ENCODE measurements at regions of chr12 and their contacts with region 1.

Region 1: DNA sequence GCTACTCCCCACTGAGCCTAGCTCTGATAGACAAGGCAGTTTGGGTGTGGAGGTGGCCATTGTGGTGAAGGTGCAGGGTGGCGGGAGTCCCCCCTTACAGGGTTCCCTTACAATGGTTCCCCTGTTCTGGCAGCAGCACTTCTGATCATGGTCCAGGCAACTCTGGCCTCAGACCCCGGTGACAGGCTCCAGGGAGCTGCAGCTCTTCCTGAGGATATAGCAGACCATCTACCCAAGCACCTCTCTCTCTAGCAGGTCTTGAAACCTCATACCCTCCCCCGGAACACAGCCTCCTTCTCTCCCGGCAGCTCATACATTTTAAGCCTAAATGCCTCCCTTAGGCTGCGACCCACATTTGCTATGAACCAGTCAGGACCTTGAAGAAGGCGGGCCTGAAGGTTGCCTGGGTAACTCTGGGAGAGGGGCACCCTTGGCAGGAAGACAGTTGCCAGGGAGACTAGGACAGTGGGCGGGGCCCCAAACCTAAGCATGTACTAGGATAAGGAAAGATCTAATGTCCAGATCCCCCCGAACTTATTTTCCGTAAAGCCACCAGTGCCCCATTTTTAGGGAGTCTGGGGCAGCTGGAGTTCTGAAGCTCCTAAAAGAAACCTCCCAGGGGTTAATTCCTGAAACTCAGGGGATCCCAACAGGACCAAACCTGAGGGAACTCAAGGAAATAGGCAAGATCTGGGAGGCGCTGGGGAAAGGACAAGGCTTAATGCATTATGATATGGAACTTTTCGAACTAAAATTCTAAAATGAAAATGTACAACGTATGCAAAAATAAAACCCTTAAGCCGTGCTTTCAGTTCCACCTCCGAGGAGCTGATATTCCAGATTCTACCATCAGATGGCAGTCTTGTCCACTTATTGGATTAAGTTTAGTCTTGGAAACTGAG is 4.5 kb upstream of the GDF11 start:
- DNase-seq: peak; percentile 73
- H3K4me3 Mint-ChIP-seq: peak overlapping the region; percentile 79
- H3K27ac Mint-ChIP-seq: peak overlapping the region; percentile 73
- H3K4me1 Mint-ChIP-seq: peaks cover 44% of the 10 kb centered on the region
- H3K27me3 Mint-ChIP-seq: peaks cover 3% of the 10 kb centered on the region

Region 2: GRCh38 chr12:55659486-55660385 is 78.6 kb before region 1 on chr12:
- intact Hi-C with region 1: loop called (anchors 1 kb)
- DNase-seq: no peak
- H3K4me3 Mint-ChIP-seq: no peak overlapping the region
- H3K27ac Mint-ChIP-seq: no peak overlapping the region
- H3K4me1 Mint-ChIP-seq: no peaks in the 10 kb centered on the region
- H3K27me3 Mint-ChIP-seq: peaks cover 25% of the 10 kb centered on the region

Region 3: GRCh38 chr12:55760663-55761062 is 22.3 kb after region 1 on chr12:
- intact Hi-C with region 1: no loop called
- DNase-seq: no peak
- H3K4me3 Mint-ChIP-seq: no peak overlapping the region
- H3K27ac Mint-ChIP-seq: peak overlapping the region; percentile 69
- H3K4me1 Mint-ChIP-seq: peaks cover 11% of the 10 kb centered on the region
- H3K27me3 Mint-ChIP-seq: no peaks in the 10 kb centered on the region

Region 4: GRCh38 chr12:55829967-55830600 is 91.7 kb after region 1 on chr12:
- intact Hi-C with region 1: loop called (anchors 1 kb)
- DNase-seq: peak; percentile 22
- H3K4me3 Mint-ChIP-seq: peak overlapping the region; percentile 98
- H3K27ac Mint-ChIP-seq: peak overlapping the region; percentile 92
- H3K4me1 Mint-ChIP-seq: peaks cover 37% of the 10 kb centered on the region
- H3K27me3 Mint-ChIP-seq: no peaks in the 10 kb centered on the region

Region 5: GRCh38 chr12:55940065-55940732 is 201.8 kb after region 1 on chr12:
- intact Hi-C with region 1: loop called (anchors 1 kb)
- DNase-seq: peak; percentile 76
- H3K4me3 Mint-ChIP-seq: peak overlapping the region; percentile 9
- H3K27ac Mint-ChIP-seq: peak overlapping the region; percentile 18
- H3K4me1 Mint-ChIP-seq: peaks cover 56% of the 10 kb centered on the region
- H3K27me3 Mint-ChIP-seq: no peaks in the 10 kb centered on the region

Region 6: DNA sequence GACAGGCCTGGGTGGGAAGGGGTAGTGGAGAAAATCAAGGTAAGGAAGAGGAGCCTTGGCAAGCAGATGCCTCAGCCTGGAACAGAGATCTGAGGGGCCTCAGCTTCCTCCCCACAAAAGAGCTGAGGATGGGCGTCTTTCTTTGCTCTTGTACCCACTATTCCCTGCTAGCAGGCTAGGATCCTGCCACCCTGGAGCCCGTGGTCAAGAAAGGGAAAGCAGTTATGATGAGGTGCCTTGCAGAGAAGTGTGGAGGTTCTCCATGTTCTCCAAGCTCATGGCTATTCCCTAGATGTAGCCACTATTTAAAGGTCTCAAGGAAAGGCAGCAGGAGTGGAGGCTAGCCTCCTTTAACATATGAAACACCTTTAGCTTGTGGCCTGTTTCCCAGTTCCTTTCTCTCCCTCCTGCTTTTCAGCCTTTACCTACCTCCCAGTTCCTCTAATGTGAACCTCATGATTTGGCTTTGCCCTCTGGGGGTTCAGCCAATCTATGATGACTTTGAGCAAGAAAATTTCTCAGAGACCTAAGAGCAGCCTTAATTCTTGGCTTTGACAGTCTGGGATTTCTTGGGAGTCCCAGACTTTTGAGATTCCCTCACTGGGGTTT is 283.6 kb after region 1 on chr12:
- intact Hi-C with region 1: no loop called
- DNase-seq: no peak
- H3K4me3 Mint-ChIP-seq: peak overlapping the region; percentile 97
- H3K27ac Mint-ChIP-seq: peak overlapping the region; percentile 98
- H3K4me1 Mint-ChIP-seq: peaks cover 42% of the 10 kb centered on the region
- H3K27me3 Mint-ChIP-seq: no peaks in the 10 kb centered on the region

Region 7: GRCh38 chr12:56104109-56104814 is 365.9 kb after region 1 on chr12 and contains the start of gene PA2G4:
- intact Hi-C with region 1: loop called (anchors 1 kb)
- DNase-seq: peak; percentile 99
- H3K4me3 Mint-ChIP-seq: peak within 1 kb of the TSS; percentile 98
- H3K27ac Mint-ChIP-seq: peak within 1 kb of the TSS; percentile 89
- H3K4me1 Mint-ChIP-seq: peaks cover 49% of the 10 kb centered on the region
- H3K27me3 Mint-ChIP-seq: no peaks in the 10 kb centered on the region
- total RNA-seq, gene PA2G4: 404 and 419 TPM in 2 replicates